Esophagus squamous epithelium (tissue), 5 donors: ENCODE measurements at regions of chrX and their contacts with region 1.

Region 1: DNA sequence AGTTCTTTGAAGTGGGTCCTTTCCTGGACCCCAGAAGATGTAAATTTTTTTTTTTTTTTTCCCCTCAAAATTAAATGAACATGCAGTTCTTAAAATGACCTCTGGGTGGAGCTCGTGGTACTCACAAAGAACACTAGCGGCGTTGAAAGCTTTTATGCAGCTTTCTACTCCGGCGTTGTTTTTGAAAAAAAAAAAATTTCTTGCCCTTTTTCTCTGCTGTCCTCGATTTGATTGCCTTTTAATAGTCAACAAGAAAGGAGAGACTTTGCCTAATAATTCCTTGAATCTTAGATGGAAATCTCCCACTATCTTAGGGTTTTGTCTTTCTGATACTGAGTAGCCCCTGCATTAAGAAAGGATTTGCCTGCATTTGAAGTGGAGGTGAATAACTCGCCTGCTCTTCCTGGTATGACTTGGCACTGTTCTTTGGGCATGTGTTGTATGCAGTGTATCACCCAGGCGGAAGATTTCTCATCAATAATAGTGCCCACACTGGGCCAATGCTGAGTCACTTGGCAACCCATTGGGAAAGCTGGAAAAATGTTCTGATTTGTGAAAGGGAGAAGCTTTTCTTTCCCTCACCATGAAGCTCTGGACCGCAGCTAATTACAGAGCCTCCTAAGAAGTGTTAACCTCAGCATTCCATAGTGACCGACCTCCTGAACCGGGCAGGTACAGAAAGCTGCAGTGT is 104.0 kb downstream of the PHEX start:
- DNase-seq: no peak
- H3K4me3 ChIP-seq: peak overlapping the region in 1 of 4 donors; percentile 15
- H3K27ac ChIP-seq: peak overlapping the region; percentile 35 to 62 (median 45)
- H3K4me1 ChIP-seq: peaks cover 0 to 30% (median 7%) of the 10 kb centered on the region in 3 donors
- H3K27me3 ChIP-seq: no peaks in the 10 kb centered on the region
- CTCF ChIP-seq: peak; percentile 47 to 83 (median 59)
- POLR2A ChIP-seq: no peak

Region 2: GRCh38 chrX:21985332-21985777 is 150.8 kb before region 1 on chrX:
- intact Hi-C with region 1: loop called (anchors 10 kb)
- DNase-seq: no peak
- H3K4me3 ChIP-seq: no peak overlapping the region
- H3K27ac ChIP-seq: no peak overlapping the region
- H3K4me1 ChIP-seq: no peaks in the 10 kb centered on the region
- H3K27me3 ChIP-seq: no peaks in the 10 kb centered on the region
- CTCF ChIP-seq: peak; percentile 88 to 96 (median 91)
- POLR2A ChIP-seq: no peak

Region 3: DNA sequence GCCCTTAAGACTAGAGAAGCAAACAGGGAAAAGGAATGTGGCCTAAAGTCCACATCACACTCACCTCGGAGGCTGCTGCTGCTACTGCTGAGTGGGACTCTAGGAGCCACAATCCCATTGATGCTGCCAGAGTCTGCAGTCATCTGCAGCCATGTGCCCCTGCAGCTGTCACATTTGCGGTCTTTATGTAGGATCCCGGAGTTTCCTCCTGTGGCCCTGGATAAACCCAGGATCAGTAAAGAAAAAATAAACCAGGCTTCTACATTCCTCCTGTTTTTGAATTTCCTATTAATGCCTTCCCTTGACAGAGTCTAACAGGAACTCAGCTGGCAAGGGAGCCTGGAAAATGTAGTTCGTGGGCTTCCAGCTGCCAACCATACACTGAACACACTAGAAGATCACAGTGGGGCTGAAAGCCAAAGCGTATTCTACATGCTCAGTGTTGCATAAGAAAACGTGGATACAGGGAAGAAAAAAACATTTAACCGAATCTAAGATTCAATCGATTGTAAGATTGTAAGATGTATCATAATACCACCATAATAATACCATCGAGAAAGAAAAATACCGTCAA is 114.3 kb before region 1 on chrX:
- intact Hi-C with region 1: no loop called
- DNase-seq: no peak
- H3K4me3 ChIP-seq: no peak overlapping the region
- H3K27ac ChIP-seq: no peak overlapping the region
- H3K4me1 ChIP-seq: no peaks in the 10 kb centered on the region
- H3K27me3 ChIP-seq: no peaks in the 10 kb centered on the region
- CTCF ChIP-seq: no peak
- POLR2A ChIP-seq: no peak

Region 4: DNA sequence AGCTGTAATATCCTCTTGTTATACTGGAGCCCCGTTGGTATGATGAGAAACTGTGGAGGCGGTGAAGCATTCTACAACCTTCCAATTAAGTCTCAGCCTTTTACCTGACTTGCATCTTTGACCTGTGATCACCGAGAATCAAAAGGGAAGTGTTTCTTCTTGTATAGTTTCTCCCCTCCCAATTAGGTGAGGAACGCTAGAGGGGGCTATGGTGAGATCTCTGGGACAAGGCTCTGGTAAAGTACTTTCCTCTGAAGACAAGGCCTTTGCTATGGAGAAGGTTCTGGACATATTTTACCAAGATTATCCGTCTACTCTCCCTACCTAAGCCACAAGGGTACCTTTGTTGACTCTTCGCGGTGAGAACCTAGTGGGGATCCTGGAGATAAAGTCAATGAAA is 247.8 kb after region 1 on chrX:
- intact Hi-C with region 1: no loop called
- DNase-seq: no peak
- H3K4me3 ChIP-seq: no peak overlapping the region
- H3K27ac ChIP-seq: no peak overlapping the region
- H3K4me1 ChIP-seq: no peaks in the 10 kb centered on the region
- H3K27me3 ChIP-seq: no peaks in the 10 kb centered on the region
- CTCF ChIP-seq: no peak
- POLR2A ChIP-seq: no peak